Endothelial cell of umbilical vein (primary cell): ENCODE measurements at regions of chr3 and their contacts with region 1.

Region 1: GRCh38 chr3:8938021-8938420 is 25.3 kb downstream of the RAD18 start:
- DNase-seq: peak; percentile 61
- H3K4me3 ChIP-seq: no peak overlapping the region
- H3K27ac ChIP-seq: peak overlapping the region; percentile 87
- H3K4me1 ChIP-seq: peaks cover 21% of the 10 kb centered on the region
- H3K27me3 ChIP-seq: no peaks in the 10 kb centered on the region
- CTCF ChIP-seq: peak; percentile 19 to 32
- POLR2A ChIP-seq: no peak

Region 2: GRCh38 chr3:8869613-8870012 is 68.4 kb before region 1 on chr3:
- CTCF ChIA-PET with region 1: no interaction called
- POLR2A ChIA-PET with region 1: no interaction called
- dilution Hi-C with region 1: no loop called
- intact Hi-C with region 1: loop called (anchors 1 kb)
- DNase-seq: peak; percentile 71
- H3K4me3 ChIP-seq: no peak overlapping the region
- H3K27ac ChIP-seq: peak overlapping the region; percentile 71
- H3K4me1 ChIP-seq: peaks cover 23% of the 10 kb centered on the region
- H3K27me3 ChIP-seq: no peaks in the 10 kb centered on the region
- CTCF ChIP-seq: no peak
- POLR2A ChIP-seq: no peak